Caco-2 (cell line): ENCODE measurements at regions of chr2 and their contacts with region 1.

Region 1: DNA sequence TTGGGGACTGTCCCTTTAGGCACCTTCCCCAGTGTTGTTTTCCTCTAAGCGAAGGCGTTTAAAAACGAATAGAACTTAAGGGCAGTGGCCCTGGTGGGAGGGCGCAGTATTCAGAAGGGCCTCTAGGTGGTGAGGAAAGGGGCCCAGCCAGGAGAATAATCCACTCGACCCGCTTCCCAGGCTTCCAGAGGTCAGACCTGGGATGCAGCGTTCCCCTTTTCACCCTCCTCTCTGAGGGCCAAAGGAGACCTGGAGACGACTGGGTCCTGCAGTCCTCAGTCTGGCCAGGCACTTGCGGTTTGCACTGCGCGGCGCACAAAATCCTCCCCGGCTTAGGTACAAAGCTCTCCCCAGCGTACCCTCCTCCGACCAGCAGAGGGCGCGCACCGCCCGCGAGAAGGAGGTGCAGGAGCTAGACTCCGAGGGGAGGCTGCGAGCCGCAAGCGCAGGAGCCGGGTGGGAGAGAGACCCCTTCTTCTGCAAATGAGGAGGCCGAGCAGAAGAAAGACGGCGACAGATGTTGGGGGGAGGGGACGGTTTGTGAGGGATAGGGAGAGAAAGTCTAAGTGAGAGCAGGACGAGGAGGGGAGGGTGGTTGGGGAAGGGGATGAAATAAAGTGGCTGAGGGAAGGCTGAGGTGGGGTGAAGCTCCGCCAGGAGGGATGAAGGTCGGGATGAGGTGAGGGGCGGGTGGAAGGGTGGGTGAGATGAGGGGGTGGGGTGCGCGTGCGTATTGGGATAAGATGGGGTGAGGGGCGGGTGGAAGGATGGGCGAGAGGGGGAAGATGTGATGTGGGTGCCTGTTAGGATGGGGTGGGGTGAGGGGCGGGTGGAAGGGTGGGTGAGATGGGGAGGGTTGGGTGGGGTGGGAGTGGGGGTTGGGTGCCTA is 4.9 kb downstream of the FEV start:
- DNase-seq: peak; percentile 87 to 90
- H3K4me3 ChIP-seq: peak overlapping the region; percentile 28
- H3K4me3 Mint-ChIP-seq: peak overlapping the region; percentile 31
- H3K27ac Mint-ChIP-seq: no peak overlapping the region
- H3K4me1 ChIP-seq: peaks cover 14% of the 10 kb centered on the region
- H3K4me1 Mint-ChIP-seq: peaks cover 6% of the 10 kb centered on the region
- H3K27me3 ChIP-seq: peaks cover 9% of the 10 kb centered on the region
- H3K27me3 Mint-ChIP-seq: peaks cover 23% of the 10 kb centered on the region
- CTCF ChIP-seq: peak; percentile 92 to 97

Region 2: GRCh38 chr2:218860950-218861381 is 119.1 kb before region 1 on chr2:
- CTCF ChIA-PET with region 1: interaction called, 12 read pairs
- POLR2A ChIA-PET with region 1: no interaction called
- intact Hi-C with region 1: no loop called
- DNase-seq: peak; percentile 88 to 93
- H3K4me3 ChIP-seq: peak overlapping the region; percentile 43
- H3K4me3 Mint-ChIP-seq: peak overlapping the region; percentile 76
- H3K27ac Mint-ChIP-seq: no peak overlapping the region
- H3K4me1 ChIP-seq: peaks cover 43% of the 10 kb centered on the region
- H3K4me1 Mint-ChIP-seq: peaks cover 32% of the 10 kb centered on the region
- H3K27me3 ChIP-seq: peaks cover 6% of the 10 kb centered on the region
- H3K27me3 Mint-ChIP-seq: peaks cover 8% of the 10 kb centered on the region
- CTCF ChIP-seq: no peak

Region 3: DNA sequence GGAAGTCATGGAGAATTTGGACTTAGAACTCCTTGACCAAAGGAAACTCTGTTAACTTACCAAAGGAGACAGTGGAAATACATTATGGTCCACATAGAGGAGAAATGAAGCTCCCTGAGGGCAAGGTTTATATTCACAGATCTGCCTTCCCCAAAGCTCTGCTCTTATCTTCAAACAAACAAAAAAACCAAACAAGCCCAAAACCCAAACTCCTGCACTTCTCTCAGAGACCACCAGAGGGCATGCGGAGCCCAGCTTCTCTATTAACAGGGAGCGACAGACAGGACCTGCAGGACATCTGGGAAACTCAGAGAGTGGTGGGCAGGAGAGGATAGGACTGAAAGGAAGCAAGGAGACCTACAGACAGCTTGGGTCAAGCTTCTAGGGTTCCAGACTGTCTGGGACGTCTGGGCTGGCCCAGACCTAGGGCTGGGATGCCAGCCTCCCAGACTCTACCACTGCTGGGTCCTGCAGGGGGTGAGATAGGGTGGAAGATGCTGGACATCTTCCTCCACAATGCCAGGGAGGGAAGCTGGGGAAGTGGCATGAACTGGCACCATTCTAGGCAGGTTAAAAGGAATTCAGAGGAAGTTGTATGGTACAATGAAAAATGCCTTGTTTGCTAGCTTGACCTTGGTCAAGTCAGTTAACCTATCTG is 103.4 kb before region 1 on chr2:
- CTCF ChIA-PET with region 1: interaction called, 20 read pairs
- POLR2A ChIA-PET with region 1: no interaction called
- intact Hi-C with region 1: loop called (anchors 1 kb)
- DNase-seq: peak; percentile 83 to 87
- H3K4me3 ChIP-seq: no peak overlapping the region
- H3K4me3 Mint-ChIP-seq: no peak overlapping the region
- H3K27ac Mint-ChIP-seq: no peak overlapping the region
- H3K4me1 ChIP-seq: peaks cover 17% of the 10 kb centered on the region
- H3K4me1 Mint-ChIP-seq: no peaks in the 10 kb centered on the region
- H3K27me3 ChIP-seq: no peaks in the 10 kb centered on the region
- H3K27me3 Mint-ChIP-seq: no peaks in the 10 kb centered on the region
- CTCF ChIP-seq: peak; percentile 94 to 97

Region 4: DNA sequence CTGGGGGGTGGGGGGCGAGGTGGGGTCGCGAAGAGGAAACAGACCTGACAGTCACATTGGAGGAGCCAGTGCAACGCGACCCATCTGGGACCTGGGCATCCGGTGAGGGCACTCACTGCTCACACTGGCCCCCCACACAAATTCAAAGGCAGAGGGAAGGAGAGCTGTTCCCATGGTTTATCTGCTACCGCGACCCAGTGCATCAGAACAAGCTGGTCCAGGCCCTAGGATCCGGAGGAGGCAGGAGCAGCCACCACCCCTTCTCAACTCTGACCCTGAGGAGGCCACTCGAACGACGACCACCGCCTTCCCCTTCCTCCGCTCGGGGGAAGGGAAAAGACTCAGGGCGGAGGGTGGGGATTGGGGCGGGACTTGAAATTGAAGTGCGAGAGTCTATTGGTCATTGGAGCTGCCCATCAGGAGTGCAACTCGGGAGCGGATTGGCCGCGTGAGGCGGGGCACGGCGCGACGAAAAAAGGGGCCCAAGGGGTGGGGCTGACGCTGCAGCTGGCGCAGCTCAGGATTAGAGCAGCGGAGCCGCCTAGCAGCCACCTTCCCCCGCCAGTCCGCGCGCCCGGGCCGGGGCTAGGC is 20.9 kb before region 1 on chr2 and contains the start of gene CDK5R2:
- CTCF ChIA-PET with region 1: interaction called, 11 read pairs
- POLR2A ChIA-PET with region 1: no interaction called
- intact Hi-C with region 1: loop called (anchors 2 kb)
- DNase-seq: peak; percentile 94
- H3K4me3 ChIP-seq: peak within 1 kb of the TSS; percentile 52
- H3K4me3 Mint-ChIP-seq: peak within 1 kb of the TSS; percentile 76
- H3K27ac Mint-ChIP-seq: no peak within 1 kb of the TSS
- H3K4me1 ChIP-seq: peaks cover 36% of the 10 kb centered on the region
- H3K4me1 Mint-ChIP-seq: peaks cover 16% of the 10 kb centered on the region
- H3K27me3 ChIP-seq: peaks cover 4% of the 10 kb centered on the region
- H3K27me3 Mint-ChIP-seq: peaks cover 32% of the 10 kb centered on the region
- CTCF ChIP-seq: no peak
- total RNA-seq, gene CDK5R2: 0.18 and 0.21 TPM in 2 replicates

Region 5: DNA sequence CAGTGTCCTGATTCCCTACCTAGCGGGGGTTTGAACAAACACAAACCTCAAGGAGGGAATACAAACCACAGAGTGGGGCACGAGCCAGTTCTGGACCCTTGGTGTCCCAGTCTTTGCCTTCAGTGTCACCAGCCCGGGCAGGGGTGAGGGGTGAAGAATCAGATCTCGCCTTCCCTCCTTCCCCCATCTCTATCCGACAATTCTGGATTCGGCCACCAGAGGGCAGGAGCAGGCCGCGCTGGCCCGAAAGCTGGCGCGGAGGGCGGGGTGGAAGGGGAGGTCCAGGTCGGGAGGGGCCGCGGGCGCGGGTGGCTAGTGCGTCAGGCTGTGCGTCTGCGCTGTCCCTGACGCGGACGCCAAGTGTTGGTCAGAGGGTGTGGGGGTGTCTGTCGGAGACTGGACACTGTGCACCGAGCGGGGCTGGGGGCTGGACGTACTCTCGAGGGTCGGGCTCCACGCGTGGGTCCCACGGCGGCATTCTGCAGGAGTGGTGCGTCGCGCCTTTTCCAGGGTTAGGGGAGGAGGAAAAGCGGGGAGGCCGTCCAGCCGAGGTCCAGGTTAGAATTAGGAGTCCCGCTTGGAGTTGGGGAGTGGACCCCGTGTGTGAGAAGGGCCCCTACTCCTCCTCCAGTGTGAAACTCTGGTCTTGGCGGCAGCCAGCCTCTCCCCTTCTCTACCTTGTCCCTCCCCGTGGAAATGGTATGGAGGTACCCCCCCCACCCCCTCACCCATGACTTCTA is 16.1 kb after region 1 on chr2:
- CTCF ChIA-PET with region 1: interaction called, 39 read pairs
- POLR2A ChIA-PET with region 1: interaction called, 3 read pairs
- intact Hi-C with region 1: no loop called
- DNase-seq: peak; percentile 88 to 95
- H3K4me3 ChIP-seq: peak overlapping the region; percentile 47
- H3K4me3 Mint-ChIP-seq: peak overlapping the region; percentile 82
- H3K27ac Mint-ChIP-seq: peak overlapping the region; percentile 83
- H3K4me1 ChIP-seq: peaks cover 21% of the 10 kb centered on the region
- H3K4me1 Mint-ChIP-seq: peaks cover 9% of the 10 kb centered on the region
- H3K27me3 ChIP-seq: peaks cover 2% of the 10 kb centered on the region
- H3K27me3 Mint-ChIP-seq: peaks cover 6% of the 10 kb centered on the region
- CTCF ChIP-seq: peak; percentile 93 to 95

Region 6: GRCh38 chr2:219002395-219003266 is 22.5 kb after region 1 on chr2:
- CTCF ChIA-PET with region 1: interaction called, 39 read pairs
- POLR2A ChIA-PET with region 1: no interaction called
- intact Hi-C with region 1: no loop called
- DNase-seq: peak in 1 of 2 experiments; percentile 85
- H3K4me3 ChIP-seq: peak overlapping the region; percentile 67
- H3K4me3 Mint-ChIP-seq: peak overlapping the region; percentile 79
- H3K27ac Mint-ChIP-seq: no peak overlapping the region
- H3K4me1 ChIP-seq: peaks cover 25% of the 10 kb centered on the region
- H3K4me1 Mint-ChIP-seq: peaks cover 15% of the 10 kb centered on the region
- H3K27me3 ChIP-seq: no peaks in the 10 kb centered on the region
- H3K27me3 Mint-ChIP-seq: peaks cover 7% of the 10 kb centered on the region
- CTCF ChIP-seq: peak; percentile 48 to 77